AG04449 (cell line): ENCODE measurements at regions of chr16 and their contacts with region 1.

Region 1: DNA sequence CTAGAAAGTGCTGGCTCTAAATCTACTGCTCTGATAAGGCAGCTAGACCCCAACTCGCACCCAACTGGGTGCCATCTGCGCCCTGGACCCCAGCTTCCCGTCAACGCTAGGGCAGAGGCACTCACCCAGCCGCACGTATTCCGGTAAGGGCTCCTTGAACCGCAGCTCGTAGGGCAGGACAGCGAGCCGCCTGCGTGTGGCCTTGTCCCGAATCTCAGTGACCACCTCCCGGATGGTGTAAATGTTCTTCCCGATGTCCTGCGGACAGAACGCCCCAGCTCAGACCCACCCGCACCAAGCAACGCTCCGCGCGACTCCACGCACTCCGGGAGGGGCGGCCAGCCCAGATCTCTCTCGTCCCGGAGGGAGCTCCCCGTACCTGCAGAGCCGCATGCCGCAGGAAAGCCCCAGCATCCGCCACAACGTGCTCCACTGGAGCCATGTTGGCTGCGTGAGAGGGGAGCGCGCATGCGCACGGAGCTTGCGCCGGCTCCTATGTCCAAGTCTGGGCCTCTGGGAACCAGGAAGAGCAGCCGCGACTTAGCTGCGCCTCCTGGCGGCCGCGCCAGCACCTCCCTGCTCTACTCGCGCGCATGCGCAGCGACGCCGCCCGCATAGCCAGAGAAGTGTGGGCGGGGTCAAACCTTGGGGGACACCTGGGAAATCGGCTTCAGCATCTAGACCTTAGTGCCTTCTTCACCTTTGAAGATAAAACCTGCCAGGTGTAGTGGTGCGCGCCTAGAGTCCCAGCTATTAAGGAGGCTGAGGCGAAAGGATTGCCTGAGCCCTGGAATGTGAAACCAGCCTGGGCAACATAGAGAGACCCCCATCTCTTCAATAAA is at the start of gene NOB1:
- DNase-seq: peak; percentile 82
- H3K4me3 ChIP-seq: peak within 1 kb of the TSS; percentile 95
- CTCF ChIP-seq: peak; percentile 97

Region 2: DNA sequence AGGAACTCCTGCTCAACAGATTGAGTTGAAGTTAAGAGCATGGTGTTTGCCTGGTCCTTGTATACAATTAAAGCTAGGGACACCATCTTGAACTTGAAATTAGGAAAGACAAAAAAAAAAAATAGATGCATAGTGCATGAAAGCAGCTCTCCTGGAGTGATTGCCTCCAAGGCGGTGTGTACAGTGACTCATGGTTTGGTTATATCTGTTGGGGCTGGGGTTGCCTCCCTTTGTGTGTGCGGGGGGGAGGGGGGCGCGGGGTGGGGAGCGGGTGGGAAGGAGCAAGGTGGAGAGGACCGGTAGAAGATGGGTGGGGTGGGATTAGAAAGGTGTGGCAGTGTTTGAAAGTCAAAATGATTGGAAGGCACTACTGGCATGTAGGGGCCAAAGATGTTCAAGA is 406.5 kb before region 1 on chr16:
- CTCF ChIA-PET with region 1: no interaction called
- POLR2A ChIA-PET with region 1: no interaction called
- DNase-seq: no peak
- H3K4me3 ChIP-seq: no peak overlapping the region
- CTCF ChIP-seq: no peak

Region 3: GRCh38 chr16:69396187-69397061 is 358.3 kb before region 1 on chr16:
- CTCF ChIA-PET with region 1: interaction called, 154 read pairs
- POLR2A ChIA-PET with region 1: no interaction called
- DNase-seq: peak; percentile 86
- H3K4me3 ChIP-seq: peak overlapping the region; percentile 6
- CTCF ChIP-seq: peak; percentile 30

Region 4: GRCh38 chr16:69482410-69482991 is 272.2 kb before region 1 on chr16:
- CTCF ChIA-PET with region 1: no interaction called
- POLR2A ChIA-PET with region 1: no interaction called
- DNase-seq: no peak
- H3K4me3 ChIP-seq: no peak overlapping the region
- CTCF ChIP-seq: no peak

Region 5: DNA sequence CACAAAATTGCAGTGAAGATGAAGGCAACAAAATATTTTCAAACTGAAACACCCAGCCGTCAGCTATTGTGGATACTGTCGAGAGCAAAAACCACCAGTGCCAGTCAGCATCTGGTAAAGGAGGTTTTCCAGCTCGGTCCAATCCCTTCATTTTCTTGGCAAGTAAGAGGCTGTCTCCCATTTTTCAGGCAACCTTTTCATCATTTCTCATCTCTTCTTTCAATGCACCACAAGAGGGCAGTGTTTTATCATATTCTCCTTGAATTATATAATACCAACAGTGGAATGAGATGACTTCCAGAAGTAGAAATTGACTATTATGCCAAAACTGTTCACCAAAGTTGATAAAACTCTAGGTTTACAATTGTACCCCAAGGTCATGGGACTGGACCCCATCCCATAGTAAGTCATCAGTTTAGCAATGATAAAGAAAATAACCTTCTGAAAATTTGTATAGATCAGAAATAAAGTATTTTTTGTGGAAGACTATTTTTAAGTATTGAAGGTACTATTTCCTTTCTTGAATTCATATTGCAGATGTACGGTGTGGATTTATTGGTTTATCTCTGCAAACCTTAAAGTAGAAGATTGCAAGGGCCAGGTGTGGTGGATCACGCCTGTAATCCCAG is 45.1 kb before region 1 on chr16:
- CTCF ChIA-PET with region 1: interaction called, 66 read pairs
- POLR2A ChIA-PET with region 1: interaction called, 4 read pairs
- DNase-seq: no peak
- H3K4me3 ChIP-seq: no peak overlapping the region
- CTCF ChIP-seq: peak; percentile 39

Region 6: DNA sequence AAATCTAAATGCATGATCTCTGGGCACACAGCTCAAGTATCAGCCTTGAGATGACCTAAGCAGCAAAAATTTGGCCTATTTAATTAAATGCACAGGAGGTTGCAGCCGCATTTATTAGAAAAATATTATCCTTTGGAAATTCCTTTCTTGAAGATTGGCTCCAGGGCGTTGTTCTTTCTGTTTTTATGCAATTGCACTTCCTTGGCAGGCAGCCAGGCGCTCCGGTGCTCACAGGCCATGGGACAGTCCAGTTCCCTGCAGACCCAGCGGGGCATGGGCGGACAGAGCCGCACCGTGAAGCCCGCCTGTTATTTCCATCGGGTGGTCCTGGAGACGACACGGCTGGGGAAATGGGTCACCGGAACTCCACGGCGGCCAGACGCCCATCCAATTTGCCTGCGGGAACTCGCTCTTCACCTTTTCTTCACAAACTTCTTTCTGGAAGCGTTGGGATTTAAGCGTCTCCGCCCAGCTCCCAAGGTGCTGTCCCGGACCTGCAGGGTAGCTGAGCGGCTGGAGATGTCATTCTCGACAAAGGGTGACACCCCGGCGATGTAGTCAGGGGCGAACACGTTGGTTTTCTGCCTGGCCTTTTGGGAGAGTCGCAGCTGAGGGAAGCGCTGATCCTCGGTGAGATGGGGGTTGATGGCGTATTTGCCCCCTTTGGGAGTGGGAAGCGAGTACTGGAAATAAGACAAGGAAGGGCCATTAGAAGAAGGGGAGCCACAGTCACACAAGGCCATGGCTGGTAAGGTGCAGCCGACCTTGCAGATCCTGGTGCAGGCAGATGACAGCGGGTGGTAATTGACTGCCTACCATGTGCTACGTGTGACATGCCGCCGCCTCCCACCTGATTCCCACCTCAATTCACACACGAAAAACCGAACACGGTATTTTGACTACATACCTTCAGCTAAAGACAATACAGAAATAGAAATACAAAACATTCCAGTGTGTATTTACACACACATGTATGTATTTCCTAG is 12.5 kb before region 1 on chr16:
- CTCF ChIA-PET with region 1: interaction called, 52 read pairs
- POLR2A ChIA-PET with region 1: interaction called, 4 read pairs
- DNase-seq: no peak
- H3K4me3 ChIP-seq: no peak overlapping the region
- CTCF ChIP-seq: no peak

Region 7: DNA sequence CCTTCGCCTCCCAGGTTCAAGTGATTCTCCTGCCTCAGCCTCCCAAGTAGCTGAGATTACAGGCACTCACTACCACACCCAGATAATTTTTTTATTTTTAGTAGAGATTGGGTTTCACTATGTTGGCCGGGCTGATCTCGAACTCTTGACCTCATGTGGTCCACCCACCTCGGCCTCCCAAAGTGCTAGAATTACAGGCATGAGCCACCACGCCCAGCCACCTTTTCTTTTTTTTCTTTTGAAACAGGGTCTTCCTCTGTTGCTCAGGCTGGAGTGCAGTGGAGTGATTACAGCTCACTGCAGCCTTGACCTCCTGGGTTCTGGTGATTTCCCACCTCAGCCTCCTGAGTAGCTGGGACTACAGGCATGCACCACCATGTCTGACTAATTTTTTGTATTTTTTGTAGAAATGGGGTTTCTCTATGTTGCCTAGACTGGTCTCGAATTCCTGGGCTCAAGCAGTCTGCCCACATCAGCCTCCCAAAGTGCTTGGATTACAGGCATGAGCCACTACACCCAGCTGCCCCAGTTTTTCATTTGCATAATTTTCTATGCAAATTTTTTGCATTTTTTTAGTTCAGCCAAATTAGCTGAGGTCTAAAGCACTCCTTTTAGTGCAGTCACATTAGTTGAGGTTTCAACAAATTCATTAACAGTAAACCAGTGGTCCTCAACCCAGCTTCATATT is 18.7 kb after region 1 on chr16:
- CTCF ChIA-PET with region 1: interaction called, 28 read pairs
- POLR2A ChIA-PET with region 1: no interaction called
- DNase-seq: no peak
- H3K4me3 ChIP-seq: no peak overlapping the region
- CTCF ChIP-seq: no peak